Esophagus squamous epithelium (tissue), 5 donors: ENCODE measurements at regions of chr17 and their contacts with region 1.

Region 1: GRCh38 chr17:66906321-66907278 is 57.9 kb upstream of the CACNG4 start:
- DNase-seq: no peak
- H3K4me3 ChIP-seq: no peak overlapping the region
- H3K27ac ChIP-seq: no peak overlapping the region
- H3K4me1 ChIP-seq: peaks cover 0 to 16% (median 8%) of the 10 kb centered on the region in 3 donors
- H3K27me3 ChIP-seq: peaks cover 0 to 5% (median 0%) of the 10 kb centered on the region in 4 donors
- CTCF ChIP-seq: peak; percentile 58 to 92 (median 85)
- POLR2A ChIP-seq: no peak

Region 2: GRCh38 chr17:66702106-66702872 is 204.3 kb before region 1 on chr17:
- intact Hi-C with region 1: no loop called
- DNase-seq: no peak
- H3K4me3 ChIP-seq: no peak overlapping the region
- H3K27ac ChIP-seq: peak overlapping the region in 1 of 4 donors; percentile 39
- H3K4me1 ChIP-seq: peaks cover 0 to 3% (median 0%) of the 10 kb centered on the region in 3 donors
- H3K27me3 ChIP-seq: no peaks in the 10 kb centered on the region
- CTCF ChIP-seq: no peak
- POLR2A ChIP-seq: no peak

Region 3: DNA sequence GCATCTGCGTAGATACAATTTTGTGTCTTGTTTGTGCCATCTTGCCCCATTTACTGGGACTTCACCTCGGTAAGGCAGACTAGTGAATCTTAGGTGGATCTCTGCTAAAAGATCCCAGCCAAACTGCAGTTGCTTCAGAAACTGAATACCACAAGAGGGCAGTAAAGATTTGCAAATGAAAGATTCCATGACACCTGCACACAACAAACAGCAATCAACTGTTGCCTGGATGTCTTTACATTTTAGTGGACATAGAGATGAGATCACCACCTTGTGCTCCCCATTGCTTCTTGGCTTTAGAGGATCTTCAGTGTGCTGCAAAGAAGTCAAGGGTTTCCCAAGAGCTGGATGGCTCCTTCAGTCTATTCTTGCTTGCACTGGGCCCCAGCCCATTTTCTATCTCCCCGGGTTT is 190.8 kb before region 1 on chr17:
- intact Hi-C with region 1: loop called (anchors 5 kb)
- DNase-seq: no peak
- H3K4me3 ChIP-seq: no peak overlapping the region
- H3K27ac ChIP-seq: no peak overlapping the region
- H3K4me1 ChIP-seq: peaks cover 0 to 20% (median 0%) of the 10 kb centered on the region in 3 donors
- H3K27me3 ChIP-seq: no peaks in the 10 kb centered on the region
- CTCF ChIP-seq: peak; percentile 22 to 81 (median 68)
- POLR2A ChIP-seq: no peak

Region 4: GRCh38 chr17:66975604-66976384 is 69.2 kb after region 1 on chr17:
- intact Hi-C with region 1: no loop called
- DNase-seq: no peak
- H3K4me3 ChIP-seq: no peak overlapping the region
- H3K27ac ChIP-seq: no peak overlapping the region
- H3K4me1 ChIP-seq: peaks cover 0 to 11% (median 0%) of the 10 kb centered on the region in 3 donors
- H3K27me3 ChIP-seq: peaks cover 0 to 85% (median 0%) of the 10 kb centered on the region in 4 donors
- CTCF ChIP-seq: no peak
- POLR2A ChIP-seq: no peak